GM12878 (cell line): ENCODE measurements at regions of chr19 and their contacts with region 1.

Region 1: DNA sequence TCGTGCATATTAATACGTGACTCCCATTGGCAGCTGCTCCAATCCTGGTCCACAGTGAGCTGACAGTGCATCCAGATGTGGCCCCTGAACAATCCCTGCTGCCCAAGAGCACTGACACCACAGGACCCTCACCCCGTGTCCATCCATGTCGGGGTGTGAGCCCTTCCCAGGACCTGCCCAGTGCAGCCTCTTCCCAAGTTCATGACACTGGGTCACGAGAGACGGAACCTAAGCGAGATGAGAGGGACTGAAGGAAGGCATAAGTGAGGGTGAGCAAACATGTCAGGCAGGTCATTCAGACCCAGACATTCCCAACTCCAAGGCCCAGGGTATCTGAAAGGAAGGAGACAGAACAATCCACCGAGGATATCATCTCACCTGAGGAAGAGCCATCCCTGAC is 3.5 kb downstream of the ZNF468 start:
- DNase-seq: no peak
- ATAC-seq: no peak
- H3K4me3 ChIP-seq: no peak overlapping the region
- H3K27ac ChIP-seq: no peak overlapping the region
- H3K4me1 ChIP-seq: no peaks in the 10 kb centered on the region
- H3K27me3 ChIP-seq: no peaks in the 10 kb centered on the region
- CTCF ChIP-seq: no peak
- EP300 ChIP-seq: no peak
- POLR2A ChIP-seq: no peak
- RAD21 ChIP-seq: no peak

Region 2: GRCh38 chr19:52942386-52943133 is 88.7 kb after region 1 on chr19:
- CTCF ChIA-PET with region 1: no interaction called
- POLR2A ChIA-PET with region 1: no interaction called
- RAD21 ChIA-PET with region 1: no interaction called
- SMC1A ChIA-PET with region 1: no interaction called
- in situ Hi-C with region 1: loop called (anchors 5 kb)
- intact Hi-C with region 1: no loop called
- DNase-seq: peak; percentile 48
- ATAC-seq: peak; percentile 99
- H3K4me3 ChIP-seq: peak overlapping the region; percentile 90
- H3K27ac ChIP-seq: peak overlapping the region; percentile 77
- H3K4me1 ChIP-seq: no peaks in the 10 kb centered on the region
- H3K27me3 ChIP-seq: no peaks in the 10 kb centered on the region
- CTCF ChIP-seq: no peak
- EP300 ChIP-seq: no peak
- POLR2A ChIP-seq: peak; percentile 87
- RAD21 ChIP-seq: no peak